BJ (cell line): ENCODE measurements at regions of chr17 and their contacts with region 1.

Region 1: DNA sequence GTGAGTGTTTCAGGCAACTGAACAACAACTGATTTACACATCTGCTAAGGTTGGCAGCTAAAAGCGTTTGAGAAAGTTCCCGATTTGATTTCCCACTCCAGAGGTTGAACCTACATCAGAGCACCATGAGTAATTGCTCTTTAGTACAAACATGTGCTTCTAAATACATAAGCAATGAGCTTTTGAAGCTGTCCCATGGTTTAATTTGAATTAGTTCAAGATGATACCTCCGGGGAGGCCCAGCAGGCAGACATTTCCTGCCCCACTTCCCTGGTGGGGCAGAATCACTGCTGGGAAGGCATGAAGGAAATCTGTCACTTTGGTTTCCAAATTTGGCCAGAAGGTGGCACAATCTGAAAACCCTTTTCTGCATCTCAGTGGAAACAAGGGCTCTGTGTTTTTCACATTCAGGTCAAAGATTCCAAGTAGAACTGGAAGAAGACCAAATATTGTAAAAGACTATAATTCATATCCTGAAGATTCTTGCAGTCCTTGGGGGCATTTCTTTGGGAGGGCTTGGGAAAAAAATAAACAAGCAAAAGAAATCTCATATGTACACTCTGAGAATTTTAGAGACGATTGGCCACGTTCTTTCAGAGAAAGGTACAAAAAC is 176.2 kb upstream of the FAM20A start:
- DNase-seq: peak; percentile 27
- H3K4me3 ChIP-seq: no peak overlapping the region
- H3K27me3 ChIP-seq: no peaks in the 10 kb centered on the region
- CTCF ChIP-seq: peak; percentile 74

Region 2: GRCh38 chr17:68732301-68732749 is 45.0 kb before region 1 on chr17:
- CTCF ChIA-PET with region 1: no interaction called
- POLR2A ChIA-PET with region 1: no interaction called
- DNase-seq: no peak
- H3K4me3 ChIP-seq: no peak overlapping the region
- H3K27me3 ChIP-seq: no peaks in the 10 kb centered on the region
- CTCF ChIP-seq: no peak

Region 3: DNA sequence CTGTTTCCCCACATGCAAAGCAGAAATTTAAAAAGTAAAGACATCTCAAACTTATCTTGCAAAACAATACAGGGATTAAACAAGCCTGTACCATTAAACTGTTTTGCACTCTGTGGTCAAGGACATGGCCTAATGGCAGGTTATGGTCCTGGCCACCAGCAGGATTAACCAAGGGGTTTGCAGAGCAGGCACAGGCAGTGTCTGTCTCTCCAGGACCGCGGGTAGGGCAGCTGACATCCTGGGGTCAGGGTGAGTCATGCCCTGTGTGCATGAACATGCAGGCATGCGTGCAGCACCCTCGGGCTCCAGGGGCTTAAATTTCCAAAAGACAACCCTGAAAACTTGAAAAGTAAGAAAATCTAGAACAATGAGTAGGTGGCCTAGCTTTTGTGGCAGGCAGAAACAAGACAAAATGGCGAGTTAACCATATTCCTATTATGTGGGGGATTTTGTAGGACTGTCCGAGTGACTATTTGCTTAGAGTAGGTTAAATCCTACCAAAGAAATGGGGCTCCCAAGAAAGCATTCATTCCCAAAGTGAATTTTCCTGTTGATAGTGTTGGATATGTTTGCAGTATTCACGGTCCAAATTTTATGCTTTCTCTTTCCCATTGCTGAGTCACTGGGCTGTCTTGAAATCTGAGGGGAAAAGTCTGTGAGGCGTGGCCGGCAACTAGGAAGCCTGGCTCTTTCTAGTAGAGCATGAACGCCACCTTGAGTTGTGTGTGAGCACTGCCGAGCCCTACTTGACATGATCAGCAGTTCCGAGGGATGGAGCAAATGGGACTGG is 17.8 kb before region 1 on chr17:
- CTCF ChIA-PET with region 1: interaction called, 10 read pairs
- POLR2A ChIA-PET with region 1: no interaction called
- DNase-seq: peak; percentile 56
- H3K4me3 ChIP-seq: peak overlapping the region; percentile 34
- H3K27me3 ChIP-seq: no peaks in the 10 kb centered on the region
- CTCF ChIP-seq: peak; percentile 95

Region 4: GRCh38 chr17:68794636-68795434 is 17.5 kb after region 1 on chr17:
- CTCF ChIA-PET with region 1: interaction called, 10 read pairs
- POLR2A ChIA-PET with region 1: no interaction called
- DNase-seq: no peak
- H3K4me3 ChIP-seq: no peak overlapping the region
- H3K27me3 ChIP-seq: no peaks in the 10 kb centered on the region
- CTCF ChIP-seq: peak; percentile 49

Region 5: GRCh38 chr17:68972119-68972704 is 194.9 kb after region 1 on chr17:
- CTCF ChIA-PET with region 1: interaction called, 43 read pairs
- POLR2A ChIA-PET with region 1: no interaction called
- DNase-seq: no peak
- H3K4me3 ChIP-seq: no peak overlapping the region
- H3K27me3 ChIP-seq: no peaks in the 10 kb centered on the region
- CTCF ChIP-seq: peak; percentile 66

Region 6: DNA sequence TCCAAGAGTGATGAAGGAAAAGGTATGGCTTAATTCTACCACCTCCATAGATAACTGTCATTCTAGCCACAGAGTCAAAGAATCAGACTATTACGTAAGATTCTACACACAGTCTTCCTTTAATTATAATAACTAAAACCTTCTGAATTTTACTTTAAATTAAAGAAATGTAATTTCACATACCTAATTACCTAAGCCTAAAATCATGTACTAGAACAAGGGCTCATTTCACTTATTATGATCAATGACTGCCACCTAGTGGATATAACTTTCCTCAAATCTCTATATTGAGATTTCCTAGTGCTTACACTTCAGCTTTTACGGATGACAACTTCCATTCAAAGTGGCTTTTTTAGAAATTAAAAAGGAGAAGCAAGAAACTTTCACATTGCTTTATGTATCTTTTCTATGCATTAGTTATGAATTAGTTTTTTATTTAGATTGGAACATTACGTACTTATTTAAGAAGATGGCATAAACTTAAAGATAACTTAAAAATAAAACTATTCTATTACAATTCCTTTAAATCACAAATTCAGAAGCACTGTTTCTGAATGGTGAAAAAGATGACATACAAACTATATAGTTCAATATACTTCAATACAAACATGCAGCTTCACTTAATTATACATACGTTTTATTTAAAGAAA is 469.5 kb after region 1 on chr17:
- CTCF ChIA-PET with region 1: interaction called, 44 read pairs
- POLR2A ChIA-PET with region 1: no interaction called
- DNase-seq: no peak
- H3K4me3 ChIP-seq: no peak overlapping the region
- H3K27me3 ChIP-seq: no peaks in the 10 kb centered on the region
- CTCF ChIP-seq: peak; percentile 53